ENCODE measurements at regions of chr3 and their contacts with region 1.

Region 1: GRCh38 chr3:105516972-105517371 is 150.3 kb downstream of the ALCAM start:
- DNase-seq: peak; percentile 13
- ATAC-seq: peak; percentile 52; the same call in 1 of the 2 replicates
- H3K4me3 Mint-ChIP-seq: no peak overlapping the region
- H3K27ac Mint-ChIP-seq: no peak overlapping the region
- H3K4me1 Mint-ChIP-seq: peaks cover 16% of the 10 kb centered on the region
- H3K27me3 Mint-ChIP-seq: no peaks in the 10 kb centered on the region
- CTCF ChIP-seq: no peak

Region 2: GRCh38 chr3:105505170-105505569 is 11.8 kb before region 1 on chr3:
- CTCF ChIA-PET with region 1: interaction called, 10 read pairs
- POLR2A ChIA-PET with region 1: no interaction called
- DNase-seq: no peak
- ATAC-seq: no peak
- H3K4me3 Mint-ChIP-seq: no peak overlapping the region
- H3K27ac Mint-ChIP-seq: no peak overlapping the region
- H3K4me1 Mint-ChIP-seq: peaks cover 36% of the 10 kb centered on the region
- H3K27me3 Mint-ChIP-seq: no peaks in the 10 kb centered on the region
- CTCF ChIP-seq: no peak

Region 3: DNA sequence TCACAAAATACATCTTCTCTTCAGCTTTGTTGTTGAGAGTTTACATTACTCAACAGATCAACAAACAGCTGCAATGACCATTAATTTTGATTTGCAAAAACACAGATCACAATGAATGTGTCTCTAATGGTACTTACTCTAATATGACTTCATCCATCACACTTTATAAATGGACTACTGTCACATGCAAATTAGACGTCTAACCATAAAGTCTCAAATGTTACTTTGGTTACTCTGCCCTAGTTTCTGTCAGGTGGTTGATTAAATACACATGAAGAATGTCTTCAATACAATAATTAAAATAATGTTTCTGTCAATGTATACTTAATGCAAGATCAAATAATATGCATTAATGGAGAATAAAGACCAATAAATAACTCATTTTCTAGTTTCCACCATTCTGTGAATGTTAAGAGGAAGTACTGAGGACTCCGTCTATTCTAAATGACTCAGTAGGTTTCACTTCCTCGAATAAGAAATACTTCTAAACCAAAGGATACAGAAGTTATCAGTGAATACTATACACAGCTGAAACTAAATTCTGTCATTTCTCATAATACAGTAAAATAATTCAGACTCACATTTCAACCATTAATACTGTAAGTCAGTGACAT is 206.1 kb after region 1 on chr3:
- CTCF ChIA-PET with region 1: no interaction called
- POLR2A ChIA-PET with region 1: no interaction called
- DNase-seq: no peak
- ATAC-seq: no peak
- H3K4me3 Mint-ChIP-seq: no peak overlapping the region
- H3K27ac Mint-ChIP-seq: no peak overlapping the region
- H3K4me1 Mint-ChIP-seq: peaks cover 6% of the 10 kb centered on the region; the same call in 1 of the 2 replicates
- H3K27me3 Mint-ChIP-seq: no peaks in the 10 kb centered on the region
- CTCF ChIP-seq: no peak

Measured in WTC11 (cell line).